Naive thymus-derived CD4-positive, alpha-beta T cell (primary cell): ENCODE measurements at regions of chr11 and their contacts with region 1.

Region 1: GRCh38 chr11:38667359-38667758 is 2069.3 kb upstream of the RAG2 start:
- DNase-seq: no peak
- ATAC-seq: no peak
- H3K4me3 ChIP-seq: no peak overlapping the region
- H3K4me3 Mint-ChIP-seq: no peak overlapping the region
- H3K27ac ChIP-seq: no peak overlapping the region
- H3K27ac Mint-ChIP-seq: no peak overlapping the region
- H3K4me1 ChIP-seq: no peaks in the 10 kb centered on the region
- H3K4me1 Mint-ChIP-seq: no peaks in the 10 kb centered on the region
- H3K27me3 ChIP-seq: no peaks in the 10 kb centered on the region
- H3K27me3 Mint-ChIP-seq: no peaks in the 10 kb centered on the region

Region 2: DNA sequence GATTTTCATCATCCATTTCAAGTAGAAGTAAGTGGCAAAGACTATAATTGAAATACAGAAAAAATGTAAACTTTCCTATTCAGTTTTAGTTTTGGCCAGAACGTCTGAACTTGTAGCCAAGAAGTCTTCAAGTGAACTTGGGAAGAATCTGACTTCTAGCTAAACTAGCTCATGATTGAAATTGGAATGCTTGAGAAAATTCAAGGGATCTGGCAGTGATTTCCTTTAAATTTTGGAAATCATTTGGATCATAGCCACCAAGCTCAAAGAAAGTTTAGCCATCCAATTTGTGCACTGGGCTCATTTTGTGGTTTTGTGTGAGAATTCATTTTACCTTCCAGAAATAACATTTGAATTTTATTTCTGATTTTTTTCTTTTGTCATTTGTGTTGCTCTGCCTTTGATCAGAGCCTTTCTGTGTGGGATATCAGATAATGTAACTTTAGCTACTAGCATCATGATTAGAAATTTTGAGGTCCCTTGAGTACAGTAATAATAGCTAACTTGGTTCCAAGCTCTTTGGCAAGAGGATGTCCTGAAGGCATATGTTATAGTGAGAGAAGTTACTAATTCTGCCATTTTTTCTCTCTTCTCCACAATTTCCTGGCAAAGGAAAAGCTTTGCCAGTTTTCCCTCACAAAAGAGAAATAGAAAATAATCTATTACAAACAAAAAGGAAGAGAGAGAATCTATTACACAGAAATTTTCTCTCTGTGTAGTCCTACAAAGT is 54.4 kb after region 1 on chr11:
- CTCF ChIA-PET with region 1: no interaction called
- POLR2A ChIA-PET with region 1: no interaction called
- intact Hi-C with region 1: loop called in 1 of 2 experiments (anchors 10 kb)
- DNase-seq: no peak
- ATAC-seq: no peak
- H3K4me3 ChIP-seq: no peak overlapping the region
- H3K4me3 Mint-ChIP-seq: no peak overlapping the region
- H3K27ac ChIP-seq: no peak overlapping the region
- H3K27ac Mint-ChIP-seq: no peak overlapping the region
- H3K4me1 ChIP-seq: no peaks in the 10 kb centered on the region
- H3K4me1 Mint-ChIP-seq: no peaks in the 10 kb centered on the region
- H3K27me3 ChIP-seq: no peaks in the 10 kb centered on the region
- H3K27me3 Mint-ChIP-seq: no peaks in the 10 kb centered on the region